KBM-7 (cell line): ENCODE measurements at regions of chr19 and their contacts with region 1.

Region 1: GRCh38 chr19:54481322-54481930 is 8.3 kb upstream of the CDC42EP5 start:
- DNase-seq: peak; percentile 67

Region 2: DNA sequence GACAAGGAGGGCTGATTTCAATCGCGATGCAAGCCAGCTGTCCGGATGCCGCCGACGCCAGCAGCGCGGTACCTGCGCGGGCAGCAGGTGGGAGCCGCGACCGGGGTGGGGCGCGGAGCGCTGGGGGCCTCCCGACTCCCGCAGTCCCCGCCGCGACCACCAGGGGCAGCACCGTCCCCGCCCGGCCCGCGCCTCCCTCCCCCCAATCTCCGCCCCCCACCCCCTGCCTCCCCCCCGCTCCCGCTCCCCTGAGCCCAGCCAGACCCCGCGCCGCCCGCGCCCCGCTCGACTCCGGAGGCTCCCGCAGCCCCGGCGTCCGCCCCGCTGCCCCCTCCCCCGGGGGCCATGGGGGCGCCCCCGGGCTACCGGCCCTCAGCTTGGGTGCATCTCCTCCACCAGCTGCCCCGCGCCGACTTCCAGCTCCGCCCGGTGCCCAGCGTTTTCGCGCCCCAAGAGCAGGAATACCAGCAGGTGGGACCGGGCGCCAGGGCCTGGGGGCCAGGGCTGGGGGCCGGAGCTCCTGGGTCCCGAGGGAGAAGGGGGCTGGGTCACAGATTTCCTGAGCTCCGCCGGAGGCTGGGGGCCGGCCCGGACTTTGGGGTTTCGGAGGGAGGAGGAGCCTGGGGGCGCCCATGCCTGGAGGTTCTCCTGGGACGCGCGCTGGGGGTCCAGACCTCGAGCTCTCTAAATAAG is 66.1 kb before region 1 on chr19 and contains the start of gene TTYH1:
- in situ Hi-C with region 1: no loop called
- DNase-seq: no peak

Region 3: DNA sequence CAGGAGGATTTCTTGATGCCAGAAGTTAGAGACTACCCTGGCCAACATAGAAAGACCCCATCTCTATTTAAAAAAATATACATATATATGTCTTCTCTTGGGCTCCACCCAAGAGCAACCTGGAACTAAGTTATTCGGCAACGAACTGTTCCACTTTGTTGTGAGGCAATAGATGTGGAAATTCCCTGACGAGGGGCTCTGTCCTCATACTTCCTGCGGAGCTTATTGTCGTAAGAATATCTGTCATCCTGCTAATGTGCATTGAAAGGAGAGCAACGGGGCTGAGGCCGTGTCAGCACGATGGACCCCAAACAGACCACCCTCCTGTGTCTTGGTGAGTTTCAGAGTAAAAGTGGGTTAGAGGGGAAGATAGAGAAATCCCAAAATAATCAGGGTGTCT is 392.6 kb after region 1 on chr19 and contains the start of gene FCAR:
- in situ Hi-C with region 1: loop called (anchors 25 kb)
- DNase-seq: no peak